ENCODE measurements at regions of chr14 and their contacts with region 1.

Region 1: DNA sequence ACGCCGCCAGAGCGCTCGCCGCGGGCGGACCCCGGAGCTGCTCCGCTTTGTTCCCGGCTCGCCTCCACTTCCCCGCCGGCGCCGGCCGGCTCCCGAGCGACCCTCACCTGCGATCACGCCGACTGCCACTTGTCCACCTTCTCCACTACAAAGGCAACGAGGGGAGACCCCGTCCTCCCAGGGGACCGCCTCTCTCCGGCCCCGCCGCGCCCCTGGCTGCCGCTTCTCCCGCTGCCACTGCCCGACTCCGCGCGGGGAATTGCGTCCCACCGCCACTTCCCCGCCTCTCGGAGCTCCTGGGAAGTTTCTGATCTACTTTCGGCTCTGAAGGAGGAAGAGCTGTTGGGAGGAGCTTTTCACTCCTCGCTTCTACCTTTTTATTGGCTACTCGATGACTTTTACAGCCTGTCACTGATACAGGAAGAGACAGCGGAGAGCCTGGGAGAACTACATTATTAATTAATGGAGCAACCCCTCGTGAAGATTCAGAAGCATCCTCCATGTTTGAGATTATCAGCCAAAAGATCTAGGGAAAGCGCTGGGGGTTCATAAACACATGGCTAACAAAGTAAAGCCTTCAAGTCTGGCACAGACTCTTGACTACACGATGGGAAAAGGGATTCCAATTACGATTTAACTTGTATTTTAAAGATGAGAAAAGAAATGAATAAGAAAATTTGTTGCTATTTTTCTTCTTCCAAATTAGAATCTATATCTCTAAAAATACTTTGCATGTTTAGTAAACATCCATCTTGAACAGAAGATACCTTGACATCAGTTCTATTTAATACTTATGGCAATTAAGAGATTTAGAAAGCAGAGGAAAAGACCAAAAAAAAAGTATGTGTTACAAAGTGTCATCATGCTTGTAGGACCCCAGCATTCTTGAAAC is at the start of gene BAZ1A:
- DNase-seq: peak; percentile 66 to 86 (median 85)
- H3K4me3 ChIP-seq: peak within 1 kb of the TSS; percentile 71 to 99 (median 82)
- H3K4me3 Mint-ChIP-seq: peak within 1 kb of the TSS; percentile 100
- H3K27ac ChIP-seq: peak within 1 kb of the TSS; percentile 94 to 99
- H3K27ac Mint-ChIP-seq: peak within 1 kb of the TSS; percentile 99 to 100 (median 99)
- H3K4me1 ChIP-seq: peaks cover 14 to 18% of the 10 kb centered on the region in 2 donors
- H3K4me1 Mint-ChIP-seq: peaks cover 29% of the 10 kb centered on the region
- H3K27me3 ChIP-seq: no peaks in the 10 kb centered on the region
- H3K27me3 Mint-ChIP-seq: no peaks in the 10 kb centered on the region
- CTCF ChIP-seq: no peak
- polyA plus RNA-seq, gene BAZ1A: 7.3 to 25.5 (median 12.7) TPM

Region 2: DNA sequence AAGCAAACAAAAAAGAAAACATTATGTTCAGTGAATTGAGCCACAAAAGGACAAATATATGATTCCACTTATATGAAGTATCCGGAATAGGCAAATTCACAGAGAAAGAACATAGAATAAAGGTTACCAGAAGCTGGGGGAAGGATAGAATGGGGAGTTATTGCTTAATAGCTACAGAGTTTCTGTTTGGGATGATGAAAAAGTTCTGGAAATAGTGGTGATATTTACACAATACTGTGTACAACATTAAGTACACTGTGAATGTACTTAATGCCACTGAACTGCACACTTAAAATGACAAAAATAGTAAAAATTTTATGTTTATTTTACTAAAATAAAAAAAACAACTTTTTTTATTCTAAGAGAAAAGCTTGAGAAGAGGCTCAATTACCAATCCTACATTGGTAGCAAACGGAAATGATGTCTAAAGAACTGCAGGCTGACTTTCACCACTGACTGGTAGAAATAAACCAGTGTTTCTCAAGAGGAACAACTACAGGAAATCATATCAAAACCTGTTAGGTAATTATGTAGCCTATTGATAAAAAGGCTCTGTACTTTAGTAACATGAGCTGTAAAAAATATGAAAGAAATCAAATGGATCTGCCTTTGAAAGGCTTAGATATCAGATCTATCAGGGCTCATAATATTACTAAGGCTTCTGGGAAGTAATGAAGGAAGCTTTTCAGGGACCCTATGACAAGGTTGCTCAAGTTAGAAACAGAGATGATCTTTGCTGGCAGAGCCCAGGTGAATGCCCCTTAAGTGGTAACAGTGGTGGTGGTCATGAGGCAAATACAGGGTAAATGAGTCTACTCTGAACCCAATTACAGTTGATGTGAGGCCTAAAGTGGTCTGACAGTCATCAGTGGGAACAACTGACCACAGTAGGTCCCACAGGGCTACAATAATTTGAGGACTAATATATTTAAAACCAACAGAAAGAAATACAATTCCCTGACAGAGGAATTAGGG is 41.4 kb before region 1 on chr14:
- intact Hi-C with region 1: loop called in 1 of 2 experiments (anchors 5 kb)
- DNase-seq: peak; percentile 36 to 76 (median 74)
- H3K4me3 ChIP-seq: peak overlapping the region in 2 of 3 experiments; percentile 11 to 41
- H3K4me3 Mint-ChIP-seq: peak overlapping the region; percentile 47 to 71
- H3K27ac ChIP-seq: peak overlapping the region; percentile 77 to 81
- H3K27ac Mint-ChIP-seq: peak overlapping the region; percentile 91 to 98 (median 96)
- H3K4me1 ChIP-seq: peaks cover 65 to 78% of the 10 kb centered on the region in 2 donors
- H3K4me1 Mint-ChIP-seq: peaks cover 72% of the 10 kb centered on the region
- H3K27me3 ChIP-seq: no peaks in the 10 kb centered on the region
- H3K27me3 Mint-ChIP-seq: no peaks in the 10 kb centered on the region
- CTCF ChIP-seq: no peak

Region 3: DNA sequence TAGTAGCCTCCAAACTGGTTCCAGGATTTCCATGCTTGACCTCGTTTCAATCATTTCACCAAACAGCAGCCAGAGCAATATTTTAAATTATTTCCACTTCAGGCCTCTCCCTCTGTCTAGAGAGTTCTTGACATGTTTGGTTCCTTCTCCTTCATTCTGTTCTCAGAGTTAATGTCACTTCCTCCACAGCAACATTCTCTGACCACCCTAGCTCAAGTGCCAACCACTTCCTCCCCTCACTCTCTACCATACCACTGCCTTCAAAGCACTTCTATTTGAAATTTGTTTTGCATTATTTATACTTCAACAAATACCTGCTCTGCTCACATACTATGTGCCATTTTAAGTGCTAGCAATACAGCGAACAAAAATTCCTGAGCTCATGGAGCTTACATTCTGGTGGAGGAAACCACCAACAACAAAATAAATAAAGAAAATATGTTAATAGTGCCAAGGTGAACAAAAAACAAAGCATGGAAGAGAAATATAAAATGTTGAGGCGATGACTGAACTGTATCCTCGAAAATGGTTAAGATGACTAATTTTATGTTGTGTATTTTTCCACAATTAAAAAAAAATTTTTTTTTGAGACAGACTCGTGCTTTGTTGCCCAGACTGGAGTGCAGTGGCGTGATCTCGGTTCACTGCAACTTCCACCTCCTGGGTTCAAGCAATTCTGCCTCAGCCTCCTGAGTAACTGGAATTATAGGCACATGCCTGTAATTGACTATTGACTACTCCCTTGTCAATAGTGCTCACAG is 17.4 kb before region 1 on chr14:
- intact Hi-C with region 1: no loop called
- DNase-seq: peak in 2 of 3 donors; percentile 19 to 32
- H3K4me3 ChIP-seq: peak overlapping the region in 1 of 3 experiments; percentile 10
- H3K4me3 Mint-ChIP-seq: peak overlapping the region in 1 of 2 donors; percentile 26
- H3K27ac ChIP-seq: peak overlapping the region in 1 of 2 donors; percentile 73
- H3K27ac Mint-ChIP-seq: peak overlapping the region; percentile 68 to 89 (median 86)
- H3K4me1 ChIP-seq: peaks cover 14 to 18% of the 10 kb centered on the region in 2 donors
- H3K4me1 Mint-ChIP-seq: peaks cover 20% of the 10 kb centered on the region
- H3K27me3 ChIP-seq: no peaks in the 10 kb centered on the region
- H3K27me3 Mint-ChIP-seq: no peaks in the 10 kb centered on the region
- CTCF ChIP-seq: no peak

Region 4: DNA sequence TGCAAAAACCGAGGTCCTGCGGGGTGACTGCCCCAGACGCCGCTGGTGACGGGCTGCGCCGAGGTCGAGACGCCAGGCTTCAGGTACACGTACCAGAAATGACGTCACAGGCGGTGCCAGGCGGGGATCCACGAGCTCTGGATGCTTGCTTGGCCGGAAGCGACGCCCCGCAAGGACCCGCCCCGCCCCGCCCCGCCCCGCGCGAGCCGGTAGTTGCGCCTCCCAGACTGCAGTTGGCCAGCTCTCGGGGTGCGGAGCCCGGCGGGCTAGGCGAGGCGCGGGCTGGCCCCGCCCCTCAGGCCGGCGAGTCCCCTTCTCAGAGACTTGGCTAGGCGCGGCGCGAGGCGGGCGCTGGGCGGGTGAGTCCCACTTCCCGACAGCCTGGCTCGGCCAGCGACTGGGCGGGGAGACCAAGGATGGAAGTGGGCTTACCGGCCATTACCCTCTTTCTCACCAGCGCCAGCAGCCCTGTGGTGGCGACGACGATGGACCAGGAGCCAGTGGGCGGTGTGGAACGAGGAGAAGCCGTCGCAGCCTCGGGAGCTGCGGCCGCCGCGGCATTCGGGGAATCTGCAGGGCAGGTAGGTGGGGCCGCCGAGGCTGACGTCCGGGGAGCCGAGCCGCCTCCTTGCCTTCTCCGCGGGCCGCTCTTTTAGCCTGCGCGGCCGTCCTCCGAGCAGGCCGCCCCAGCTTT is 170.9 kb after region 1 on chr14 and contains the start of gene FAM177A1:
- intact Hi-C with region 1: loop called (anchors 2 to 5 kb)
- DNase-seq: peak; percentile 98 to 99 (median 98)
- H3K4me3 ChIP-seq: peak within 1 kb of the TSS; percentile 72 to 94 (median 86)
- H3K4me3 Mint-ChIP-seq: peak within 1 kb of the TSS; percentile 96 to 98
- H3K27ac ChIP-seq: peak within 1 kb of the TSS; percentile 89 to 95
- H3K27ac Mint-ChIP-seq: peak within 1 kb of the TSS; percentile 98 to 100 (median 99)
- H3K4me1 ChIP-seq: peaks cover 15 to 24% of the 10 kb centered on the region in 2 donors
- H3K4me1 Mint-ChIP-seq: peaks cover 26% of the 10 kb centered on the region
- H3K27me3 ChIP-seq: no peaks in the 10 kb centered on the region
- H3K27me3 Mint-ChIP-seq: peaks cover 0 to 3% (median 0%) of the 10 kb centered on the region in 3 donors
- CTCF ChIP-seq: no peak
- polyA plus RNA-seq, gene FAM177A1: 12.5 to 48.1 (median 29.4) TPM

Measured in CD14-positive monocyte (primary cell).